ENCODE measurements at regions of chr12 and their contacts with region 1.

Region 1: DNA sequence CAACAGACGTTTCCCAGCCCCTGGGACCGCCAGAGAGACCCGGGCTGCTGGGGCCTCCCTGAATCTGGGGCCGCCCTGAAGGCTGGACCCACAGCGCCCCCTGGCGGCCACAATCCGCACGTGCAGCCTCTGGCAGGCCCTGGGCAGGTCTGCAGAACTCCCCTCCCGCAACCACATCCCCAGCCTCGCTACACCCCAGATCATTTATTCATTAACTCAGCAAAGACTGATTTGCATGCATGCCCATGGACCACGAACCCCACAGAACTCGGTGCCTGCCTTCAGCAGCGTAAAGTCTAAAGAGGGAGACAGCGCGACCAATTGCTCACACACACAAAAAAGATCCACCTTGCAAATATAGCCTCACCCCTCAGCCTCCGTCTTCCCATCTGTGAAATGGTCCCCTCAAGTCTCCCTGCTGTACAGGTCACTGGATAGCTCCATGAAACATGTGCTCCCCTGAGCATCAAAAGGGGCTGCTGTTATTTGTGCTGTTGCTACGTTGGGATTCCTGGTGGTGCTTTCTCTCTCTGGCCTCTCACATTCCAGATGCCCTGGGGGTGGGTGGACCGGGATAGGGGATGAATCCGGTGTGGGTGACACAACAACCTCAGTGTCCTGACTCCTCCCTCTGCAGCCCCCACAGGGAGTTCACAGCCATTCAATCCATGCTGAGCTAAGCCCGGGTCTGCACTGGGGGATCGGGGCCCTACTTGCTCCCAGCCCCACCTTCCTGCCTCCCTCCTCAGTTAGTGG is 96.4 kb downstream of the SCARB1 start:
- DNase-seq: peak; percentile 67
- ATAC-seq: peak; percentile 85
- H3K4me3 ChIP-seq: no peak overlapping the region
- H3K27ac ChIP-seq: 0 out of 2 replicates have a peak overlapping the region, but pooled peaks have one; percentile 7
- H3K4me1 ChIP-seq: peaks cover 30% of the 10 kb centered on the region
- H3K27me3 ChIP-seq: no peaks in the 10 kb centered on the region
- CTCF ChIP-seq: peak; percentile 96 to 98 (median 97); a peak in 5 of 6 replicates
- EP300 ChIP-seq: 0 out of 4 replicates have a peak, but pooled peaks of 1 of the 2 experiments have one; percentile 20
- POLR2A ChIP-seq: no peak
- RAD21 ChIP-seq: peak; percentile 94

Region 2: GRCh38 chr12:122888232-122888867 is 1878.9 kb before region 1 on chr12:
- CTCF ChIA-PET with region 1: no interaction called
- POLR2A ChIA-PET with region 1: no interaction called
- RAD21 ChIA-PET with region 1: no interaction called
- SMC1A ChIA-PET with region 1: no interaction called
- in situ Hi-C with region 1: no loop called
- intact Hi-C with region 1: loop called (anchors 10 kb)
- DNase-seq: no peak
- ATAC-seq: peak; percentile 63
- H3K4me3 ChIP-seq: peak overlapping the region; percentile 51
- H3K27ac ChIP-seq: peak overlapping the region; percentile 71
- H3K4me1 ChIP-seq: peaks cover 36% of the 10 kb centered on the region
- H3K27me3 ChIP-seq: no peaks in the 10 kb centered on the region
- CTCF ChIP-seq: no peak
- EP300 ChIP-seq: no peak
- POLR2A ChIP-seq: peak; percentile 48
- RAD21 ChIP-seq: no peak

Region 3: DNA sequence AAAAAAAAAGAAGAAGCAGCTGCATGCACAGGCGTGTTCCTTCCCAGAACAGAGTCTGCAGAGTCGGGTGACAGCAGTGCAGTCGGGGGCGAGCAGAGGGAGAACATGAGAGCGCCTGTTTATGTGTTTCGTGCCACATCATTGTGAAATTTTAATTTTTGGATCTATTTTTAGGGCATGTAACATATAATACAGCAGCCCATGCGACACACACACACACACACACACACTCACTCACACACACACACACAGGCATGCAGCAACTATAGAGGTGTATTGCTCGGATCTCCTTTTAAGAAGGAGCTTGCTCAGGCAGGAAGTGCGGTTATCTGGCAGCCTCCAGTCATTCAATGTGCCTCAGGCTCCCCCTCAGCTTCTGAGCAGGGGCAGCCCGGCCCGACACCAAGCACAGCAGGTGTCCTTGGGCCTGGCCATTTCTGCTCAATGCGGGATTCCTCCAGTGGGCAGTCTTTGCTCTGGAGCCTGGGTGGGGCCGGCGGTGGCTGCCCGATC is 722.4 kb before region 1 on chr12:
- CTCF ChIA-PET with region 1: interaction called, 116 read pairs
- POLR2A ChIA-PET with region 1: no interaction called
- RAD21 ChIA-PET with region 1: no interaction called
- SMC1A ChIA-PET with region 1: interaction called, 6 read pairs
- in situ Hi-C with region 1: loop called (anchors 5 kb)
- intact Hi-C with region 1: no loop called
- DNase-seq: no peak
- ATAC-seq: no peak
- H3K4me3 ChIP-seq: no peak overlapping the region
- H3K27ac ChIP-seq: no peak overlapping the region
- H3K4me1 ChIP-seq: no peaks in the 10 kb centered on the region
- H3K27me3 ChIP-seq: no peaks in the 10 kb centered on the region
- CTCF ChIP-seq: no peak
- EP300 ChIP-seq: no peak
- POLR2A ChIP-seq: no peak
- RAD21 ChIP-seq: no peak

Region 4: GRCh38 chr12:124388679-124389536 is 378.3 kb before region 1 on chr12:
- CTCF ChIA-PET with region 1: interaction called, 3 read pairs
- POLR2A ChIA-PET with region 1: no interaction called
- RAD21 ChIA-PET with region 1: no interaction called
- SMC1A ChIA-PET with region 1: no interaction called
- in situ Hi-C with region 1: no loop called
- intact Hi-C with region 1: loop called (anchors 5 kb)
- DNase-seq: no peak
- ATAC-seq: peak; percentile 48
- H3K4me3 ChIP-seq: no peak overlapping the region
- H3K27ac ChIP-seq: no peak overlapping the region
- H3K4me1 ChIP-seq: peaks cover 40% of the 10 kb centered on the region
- H3K27me3 ChIP-seq: no peaks in the 10 kb centered on the region
- CTCF ChIP-seq: no peak
- EP300 ChIP-seq: no peak
- POLR2A ChIP-seq: no peak; the same call in 1 of the 2 replicates
- RAD21 ChIP-seq: no peak

Region 5: DNA sequence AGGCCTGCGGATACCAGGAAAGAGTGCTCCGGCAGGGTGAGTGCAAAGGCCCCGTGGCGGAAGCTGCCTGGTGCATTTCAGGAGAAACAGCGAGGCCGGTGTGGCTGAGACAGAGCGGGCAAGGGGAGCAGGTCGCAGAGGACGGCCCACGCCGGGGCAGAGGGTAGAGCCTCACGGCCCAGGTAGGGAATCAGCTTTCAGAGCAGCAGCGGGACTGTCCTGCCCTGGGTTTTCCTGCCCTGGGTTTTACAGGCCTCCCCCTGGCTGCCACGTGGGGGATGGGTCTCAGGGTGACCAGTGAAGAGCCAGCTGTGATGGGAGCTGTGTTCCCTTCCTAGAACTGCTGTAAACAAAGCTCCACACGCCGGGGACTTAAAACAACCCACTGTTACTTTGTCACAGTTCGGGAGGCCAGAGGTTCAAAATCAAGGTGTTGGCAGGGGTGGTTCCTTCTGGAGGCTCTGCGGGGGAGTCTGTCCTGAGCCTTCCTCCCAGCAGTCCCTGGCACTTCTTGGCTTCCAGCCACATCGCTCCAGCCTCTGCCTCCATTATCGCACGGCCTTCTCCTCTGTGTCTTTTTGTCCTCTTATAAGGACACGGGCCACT is 210.2 kb before region 1 on chr12:
- CTCF ChIA-PET with region 1: no interaction called
- POLR2A ChIA-PET with region 1: no interaction called
- RAD21 ChIA-PET with region 1: no interaction called
- SMC1A ChIA-PET with region 1: interaction called, 3 read pairs
- in situ Hi-C with region 1: loop called (anchors 5 kb)
- intact Hi-C with region 1: no loop called
- DNase-seq: no peak
- ATAC-seq: no peak
- H3K4me3 ChIP-seq: no peak overlapping the region
- H3K27ac ChIP-seq: no peak overlapping the region
- H3K4me1 ChIP-seq: peaks cover 47% of the 10 kb centered on the region
- H3K27me3 ChIP-seq: no peaks in the 10 kb centered on the region
- CTCF ChIP-seq: no peak
- EP300 ChIP-seq: no peak
- POLR2A ChIP-seq: no peak
- RAD21 ChIP-seq: no peak

Region 6: DNA sequence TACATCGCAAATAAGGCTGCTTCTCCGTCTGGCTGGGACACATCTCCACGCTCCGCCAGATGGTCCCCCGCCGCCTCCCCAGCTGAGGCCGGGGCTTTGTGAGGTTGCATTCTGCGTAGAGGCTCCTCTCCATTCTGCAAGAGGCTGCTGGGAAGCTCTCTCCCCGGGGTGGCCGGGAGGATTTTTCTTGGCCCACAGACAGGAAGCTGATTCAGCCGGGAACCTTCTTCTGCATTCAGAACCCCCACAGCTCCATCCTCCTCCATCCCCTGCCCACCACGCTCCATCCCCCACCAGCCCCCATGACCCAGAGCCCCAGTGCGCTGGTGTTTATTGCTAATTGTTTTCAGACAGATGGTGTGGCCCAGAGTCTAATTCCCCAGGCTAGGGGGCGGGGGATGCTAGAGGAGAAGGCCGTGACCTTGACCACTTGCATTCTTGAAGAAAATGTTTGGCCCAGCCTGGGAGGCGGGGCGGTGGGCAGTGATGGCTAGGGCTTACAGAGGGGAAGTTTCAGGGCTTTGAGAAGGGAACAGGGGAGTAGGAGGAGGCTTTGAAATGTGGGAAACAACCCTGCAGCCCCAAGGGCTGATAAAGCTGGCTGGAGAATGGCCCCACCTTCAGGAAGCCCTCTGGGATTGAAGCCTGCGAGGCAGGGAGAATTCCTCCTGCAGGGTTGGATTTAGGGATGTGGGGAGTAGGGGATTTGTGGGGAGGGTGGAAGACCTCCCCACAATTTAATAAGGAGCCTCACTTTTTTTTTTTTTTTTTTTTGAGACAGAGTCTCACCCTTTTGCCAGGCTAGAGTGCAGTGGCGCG is 111.3 kb before region 1 on chr12:
- CTCF ChIA-PET with region 1: no interaction called
- POLR2A ChIA-PET with region 1: no interaction called
- RAD21 ChIA-PET with region 1: no interaction called
- SMC1A ChIA-PET with region 1: no interaction called
- in situ Hi-C with region 1: no loop called
- intact Hi-C with region 1: no loop called
- DNase-seq: no peak
- ATAC-seq: no peak
- H3K4me3 ChIP-seq: no peak overlapping the region
- H3K27ac ChIP-seq: no peak overlapping the region
- H3K4me1 ChIP-seq: no peaks in the 10 kb centered on the region
- H3K27me3 ChIP-seq: peaks cover 0 to 2% of the 10 kb centered on the region in 2 experiments; a peak in 2 of 4 replicates
- CTCF ChIP-seq: no peak
- EP300 ChIP-seq: no peak
- POLR2A ChIP-seq: no peak
- RAD21 ChIP-seq: no peak

Region 7: DNA sequence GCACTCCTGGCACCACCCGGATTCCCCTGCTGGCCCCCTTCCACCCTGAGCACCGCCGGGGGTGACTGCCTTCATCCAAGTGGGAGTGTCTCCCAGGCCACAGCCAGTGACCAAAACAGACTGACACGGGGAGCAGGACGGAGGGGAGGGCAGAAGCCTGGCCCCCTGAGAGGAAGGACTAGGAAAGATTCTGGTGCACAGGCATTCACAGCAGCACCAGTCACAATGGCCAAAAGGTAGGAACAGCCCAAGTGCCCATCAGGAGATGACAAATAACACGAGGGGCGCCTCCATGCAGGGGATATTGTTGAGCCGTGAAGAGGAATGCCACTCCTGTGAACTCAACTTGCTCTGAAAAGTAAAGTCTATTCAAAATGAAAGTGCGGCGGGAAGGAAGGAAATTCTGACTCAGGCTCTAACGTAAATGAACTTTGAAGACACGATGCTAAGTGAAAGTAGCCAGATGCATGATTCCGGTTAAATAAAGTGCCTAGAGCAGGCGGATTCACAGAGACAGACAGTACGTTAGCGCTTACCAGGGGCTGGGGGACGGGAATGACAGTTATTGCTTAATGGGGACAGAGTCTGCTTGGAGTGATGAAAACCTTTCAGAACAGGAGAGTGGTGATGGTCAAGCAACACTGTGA is 53.7 kb before region 1 on chr12:
- CTCF ChIA-PET with region 1: interaction called, 5 read pairs
- POLR2A ChIA-PET with region 1: no interaction called
- RAD21 ChIA-PET with region 1: no interaction called
- SMC1A ChIA-PET with region 1: interaction called, 3 read pairs
- in situ Hi-C with region 1: no loop called
- intact Hi-C with region 1: loop called (anchors 1 kb)
- DNase-seq: peak; percentile 93
- ATAC-seq: peak; percentile 91
- H3K4me3 ChIP-seq: peak overlapping the region; percentile 32; the same call in 1 of the 2 replicates
- H3K27ac ChIP-seq: peak overlapping the region; percentile 79
- H3K4me1 ChIP-seq: peaks cover 17% of the 10 kb centered on the region
- H3K27me3 ChIP-seq: no peaks in the 10 kb centered on the region
- CTCF ChIP-seq: no peak
- EP300 ChIP-seq: peak; percentile 94 to 96
- POLR2A ChIP-seq: no peak
- RAD21 ChIP-seq: peak; percentile 29; the same call in 1 of the 2 replicates

Measured in GM12878 (cell line).